Tibial artery (tissue), 4 donors: ENCODE measurements at regions of chr2 and their contacts with region 1.

Region 1: GRCh38 chr2:27890146-27890923 is at the starts of genes BABAM2 and RBKS:
- DNase-seq: peak; percentile 85 to 94
- H3K4me3 ChIP-seq: peak within 1 kb of the TSS; percentile 61 to 82
- H3K27ac ChIP-seq: peak within 1 kb of the TSS; percentile 90 to 95
- H3K4me1 ChIP-seq: peaks cover 0 to 47% (median 19%) of the 10 kb centered on the region in 4 donors
- H3K27me3 ChIP-seq: no peaks in the 10 kb centered on the region
- CTCF ChIP-seq: no peak

Region 2: GRCh38 chr2:27771548-27772335 is 118.6 kb before region 1 on chr2 and contains the start of gene MRPL33:
- intact Hi-C with region 1: loop called (anchors 10 kb)
- DNase-seq: peak; percentile 95 to 97
- H3K4me3 ChIP-seq: peak within 1 kb of the TSS; percentile 65 to 72
- H3K27ac ChIP-seq: peak within 1 kb of the TSS; percentile 87
- H3K4me1 ChIP-seq: peaks cover 0 to 43% (median 38%) of the 10 kb centered on the region in 4 donors
- H3K27me3 ChIP-seq: no peaks in the 10 kb centered on the region
- CTCF ChIP-seq: no peak

Region 3: GRCh38 chr2:27823569-27823968 is 66.8 kb before region 1 on chr2:
- intact Hi-C with region 1: loop called (anchors 10 kb)
- DNase-seq: no peak
- H3K4me3 ChIP-seq: peak overlapping the region; percentile 27 to 43
- H3K27ac ChIP-seq: peak overlapping the region; percentile 65 to 68
- H3K4me1 ChIP-seq: peaks cover 0 to 18% (median 8%) of the 10 kb centered on the region in 4 donors
- H3K27me3 ChIP-seq: no peaks in the 10 kb centered on the region
- CTCF ChIP-seq: peak; percentile 50 to 56